CD8-positive, alpha-beta T cell (primary cell): ENCODE measurements at regions of chr13 and their contacts with region 1.

Region 1: GRCh38 chr13:98576963-98577822 is at the start of gene STK24:
- DNase-seq: peak in 8 of 9 experiments; percentile 32 to 82 (median 54)
- ATAC-seq: peak; percentile 55
- H3K4me3 ChIP-seq: peak within 1 kb of the TSS; percentile 64 to 66
- H3K4me3 Mint-ChIP-seq: peak within 1 kb of the TSS; percentile 92
- H3K27ac ChIP-seq: peak within 1 kb of the TSS; percentile 64 to 87
- H3K27ac Mint-ChIP-seq: peak within 1 kb of the TSS; percentile 94
- H3K4me1 ChIP-seq: peaks cover 38% of the 10 kb centered on the region
- H3K4me1 Mint-ChIP-seq: peaks cover 37% of the 10 kb centered on the region
- H3K27me3 ChIP-seq: no peaks in the 10 kb centered on the region
- H3K27me3 Mint-ChIP-seq: no peaks in the 10 kb centered on the region
- CTCF ChIP-seq: no peak
- total RNA-seq, gene STK24: 69.9 to 71.5 TPM

Region 2: DNA sequence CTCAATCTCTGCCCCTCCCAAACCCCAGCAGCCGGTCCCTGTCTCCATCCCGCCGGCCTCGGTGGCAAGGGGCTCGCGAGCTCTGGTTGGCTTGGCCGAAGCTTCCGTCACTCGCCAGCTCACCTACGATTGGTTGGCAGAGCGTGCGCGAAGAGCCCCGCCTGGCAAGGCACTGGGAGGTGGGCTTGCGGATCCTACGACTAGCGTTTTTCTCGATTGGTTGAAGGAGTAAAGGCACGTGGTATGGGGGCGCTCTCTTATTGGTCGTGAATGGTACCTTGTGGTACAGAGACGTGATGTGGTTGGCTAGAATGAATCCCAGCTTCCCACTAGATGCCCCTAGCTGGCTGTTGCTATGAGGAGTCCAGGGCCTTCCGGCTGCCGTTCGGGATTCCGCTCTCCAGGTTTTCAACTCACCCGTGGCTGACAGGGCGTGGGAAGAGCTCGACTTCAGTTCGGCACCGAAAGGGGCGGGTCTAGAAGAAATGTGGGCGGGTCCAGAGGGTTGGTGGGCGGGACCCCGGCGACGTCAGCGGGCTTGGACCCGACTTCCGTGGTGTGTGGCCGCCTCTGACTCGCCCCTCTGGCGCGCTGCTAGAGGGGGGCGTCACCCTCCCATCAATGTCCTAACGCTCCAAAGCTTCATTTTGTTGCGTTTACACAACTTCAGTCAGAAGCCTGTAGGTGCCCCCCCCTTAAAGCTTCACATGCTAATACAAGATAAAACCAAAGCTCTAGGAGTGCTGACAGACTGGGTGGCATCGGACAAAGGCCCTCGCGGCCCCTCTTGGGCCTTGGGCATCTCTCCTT is 1144.1 kb before region 1 on chr13:
- CTCF ChIA-PET with region 1: no interaction called
- POLR2A ChIA-PET with region 1: no interaction called
- intact Hi-C with region 1: loop called (anchors 5 to 10 kb)
- DNase-seq: peak; percentile 95 to 99 (median 98)
- ATAC-seq: peak; percentile 70
- H3K4me3 ChIP-seq: peak overlapping the region; percentile 79 to 100
- H3K4me3 Mint-ChIP-seq: peak overlapping the region; percentile 94
- H3K27ac ChIP-seq: peak overlapping the region; percentile 97 to 100
- H3K27ac Mint-ChIP-seq: peak overlapping the region; percentile 100
- H3K4me1 ChIP-seq: peaks cover 12% of the 10 kb centered on the region
- H3K4me1 Mint-ChIP-seq: peaks cover 30% of the 10 kb centered on the region
- H3K27me3 ChIP-seq: no peaks in the 10 kb centered on the region
- H3K27me3 Mint-ChIP-seq: no peaks in the 10 kb centered on the region
- CTCF ChIP-seq: no peak

Region 3: GRCh38 chr13:98103942-98104880 is 473.0 kb before region 1 on chr13:
- CTCF ChIA-PET with region 1: no interaction called
- POLR2A ChIA-PET with region 1: no interaction called
- intact Hi-C with region 1: no loop called
- DNase-seq: no peak
- ATAC-seq: no peak
- H3K4me3 ChIP-seq: no peak overlapping the region
- H3K4me3 Mint-ChIP-seq: no peak overlapping the region
- H3K27ac ChIP-seq: no peak overlapping the region
- H3K27ac Mint-ChIP-seq: no peak overlapping the region
- H3K4me1 ChIP-seq: no peaks in the 10 kb centered on the region
- H3K4me1 Mint-ChIP-seq: no peaks in the 10 kb centered on the region
- H3K27me3 ChIP-seq: no peaks in the 10 kb centered on the region
- H3K27me3 Mint-ChIP-seq: peaks cover 4% of the 10 kb centered on the region
- CTCF ChIP-seq: no peak

Region 4: GRCh38 chr13:98445340-98446233 is 131.6 kb before region 1 on chr13:
- CTCF ChIA-PET with region 1: interaction called, 4 read pairs
- POLR2A ChIA-PET with region 1: interaction called, 4 read pairs
- intact Hi-C with region 1: loop called in 1 of 2 experiments (anchors 10 kb)
- DNase-seq: peak; percentile 62 to 88 (median 81)
- ATAC-seq: peak; percentile 99
- H3K4me3 ChIP-seq: peak overlapping the region; percentile 0 to 32
- H3K4me3 Mint-ChIP-seq: peak overlapping the region; percentile 55
- H3K27ac ChIP-seq: peak overlapping the region in 1 of 2 experiments; percentile 51
- H3K27ac Mint-ChIP-seq: peak overlapping the region; percentile 92
- H3K4me1 ChIP-seq: peaks cover 18% of the 10 kb centered on the region
- H3K4me1 Mint-ChIP-seq: peaks cover 19% of the 10 kb centered on the region
- H3K27me3 ChIP-seq: no peaks in the 10 kb centered on the region
- H3K27me3 Mint-ChIP-seq: no peaks in the 10 kb centered on the region
- CTCF ChIP-seq: peak; percentile 92

Region 5: GRCh38 chr13:98542568-98543377 is 34.4 kb before region 1 on chr13:
- CTCF ChIA-PET with region 1: no interaction called
- POLR2A ChIA-PET with region 1: interaction called, 4 read pairs
- intact Hi-C with region 1: loop called (anchors 5 kb)
- DNase-seq: peak in 2 of 9 experiments; percentile 20 to 41
- ATAC-seq: peak; percentile 64
- H3K4me3 ChIP-seq: peak overlapping the region in 1 of 2 experiments; percentile 38
- H3K4me3 Mint-ChIP-seq: peak overlapping the region; percentile 75
- H3K27ac ChIP-seq: peak overlapping the region in 1 of 2 experiments; percentile 12
- H3K27ac Mint-ChIP-seq: peak overlapping the region; percentile 82
- H3K4me1 ChIP-seq: peaks cover 68% of the 10 kb centered on the region
- H3K4me1 Mint-ChIP-seq: peaks cover 91% of the 10 kb centered on the region
- H3K27me3 ChIP-seq: no peaks in the 10 kb centered on the region
- H3K27me3 Mint-ChIP-seq: no peaks in the 10 kb centered on the region
- CTCF ChIP-seq: no peak

Region 6: GRCh38 chr13:98626298-98626935 is 49.2 kb after region 1 on chr13:
- CTCF ChIA-PET with region 1: no interaction called
- POLR2A ChIA-PET with region 1: no interaction called
- intact Hi-C with region 1: no loop called
- DNase-seq: no peak
- ATAC-seq: no peak
- H3K4me3 ChIP-seq: no peak overlapping the region
- H3K4me3 Mint-ChIP-seq: no peak overlapping the region
- H3K27ac ChIP-seq: no peak overlapping the region
- H3K27ac Mint-ChIP-seq: no peak overlapping the region
- H3K4me1 ChIP-seq: no peaks in the 10 kb centered on the region
- H3K4me1 Mint-ChIP-seq: peaks cover 2% of the 10 kb centered on the region
- H3K27me3 ChIP-seq: no peaks in the 10 kb centered on the region
- H3K27me3 Mint-ChIP-seq: no peaks in the 10 kb centered on the region
- CTCF ChIP-seq: no peak

Region 7: DNA sequence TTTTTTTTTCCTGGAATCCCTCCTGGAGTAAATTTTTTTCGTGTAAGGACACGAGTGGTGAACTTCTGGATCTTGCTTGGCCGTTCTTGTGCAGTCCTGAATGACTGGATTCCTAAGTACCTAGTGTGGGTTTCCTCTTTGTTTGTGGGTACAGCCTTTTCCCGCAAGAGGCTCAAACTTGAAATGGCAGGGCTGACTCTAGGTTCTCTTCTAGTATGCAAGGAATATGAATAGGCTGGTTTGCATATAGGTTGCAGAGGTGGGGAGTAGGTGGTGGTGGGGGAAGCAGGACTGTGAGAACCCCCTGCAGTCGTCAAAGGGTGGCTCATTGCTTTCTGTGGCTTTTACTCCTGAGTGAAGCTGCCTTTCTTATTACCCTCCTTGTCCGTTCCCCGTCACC is 637.0 kb after region 1 on chr13:
- CTCF ChIA-PET with region 1: no interaction called
- POLR2A ChIA-PET with region 1: no interaction called
- intact Hi-C with region 1: loop called in 1 of 2 experiments (anchors 10 kb)
- DNase-seq: peak in 5 of 9 experiments; percentile 33 to 72 (median 60)
- ATAC-seq: peak; percentile 37
- H3K4me3 ChIP-seq: peak overlapping the region; percentile 9 to 65
- H3K4me3 Mint-ChIP-seq: peak overlapping the region; percentile 88
- H3K27ac ChIP-seq: peak overlapping the region; percentile 3 to 78
- H3K27ac Mint-ChIP-seq: peak overlapping the region; percentile 99
- H3K4me1 ChIP-seq: peaks cover 76% of the 10 kb centered on the region
- H3K4me1 Mint-ChIP-seq: peaks cover 81% of the 10 kb centered on the region
- H3K27me3 ChIP-seq: no peaks in the 10 kb centered on the region
- H3K27me3 Mint-ChIP-seq: no peaks in the 10 kb centered on the region
- CTCF ChIP-seq: no peak